PC-3 (cell line): ENCODE measurements at regions of chr15 and their contacts with region 1.

Region 1: GRCh38 chr15:83753949-83754416 is 100.1 kb downstream of the ADAMTSL3 start:
- DNase-seq: peak; percentile 87
- ATAC-seq: peak; percentile 49
- H3K4me3 ChIP-seq: peak overlapping the region; percentile 17; the same call in 1 of the 2 replicates
- H3K27ac ChIP-seq: peak overlapping the region; percentile 85
- H3K4me1 ChIP-seq: peaks cover 24% of the 10 kb centered on the region
- H3K27me3 ChIP-seq: no peaks in the 10 kb centered on the region
- CTCF ChIP-seq: no peak

Region 2: GRCh38 chr15:83784975-83785374 is 31.0 kb after region 1 on chr15:
- CTCF ChIA-PET with region 1: no interaction called
- POLR2A ChIA-PET with region 1: no interaction called
- intact Hi-C with region 1: loop called (anchors 2 kb)
- DNase-seq: peak; percentile 94
- ATAC-seq: peak; percentile 88
- H3K4me3 ChIP-seq: no peak overlapping the region
- H3K27ac ChIP-seq: peak overlapping the region; percentile 79
- H3K4me1 ChIP-seq: peaks cover 34% of the 10 kb centered on the region
- H3K27me3 ChIP-seq: no peaks in the 10 kb centered on the region
- CTCF ChIP-seq: no peak